ENCODE measurements at regions of chr14 and their contacts with region 1.

Region 1: DNA sequence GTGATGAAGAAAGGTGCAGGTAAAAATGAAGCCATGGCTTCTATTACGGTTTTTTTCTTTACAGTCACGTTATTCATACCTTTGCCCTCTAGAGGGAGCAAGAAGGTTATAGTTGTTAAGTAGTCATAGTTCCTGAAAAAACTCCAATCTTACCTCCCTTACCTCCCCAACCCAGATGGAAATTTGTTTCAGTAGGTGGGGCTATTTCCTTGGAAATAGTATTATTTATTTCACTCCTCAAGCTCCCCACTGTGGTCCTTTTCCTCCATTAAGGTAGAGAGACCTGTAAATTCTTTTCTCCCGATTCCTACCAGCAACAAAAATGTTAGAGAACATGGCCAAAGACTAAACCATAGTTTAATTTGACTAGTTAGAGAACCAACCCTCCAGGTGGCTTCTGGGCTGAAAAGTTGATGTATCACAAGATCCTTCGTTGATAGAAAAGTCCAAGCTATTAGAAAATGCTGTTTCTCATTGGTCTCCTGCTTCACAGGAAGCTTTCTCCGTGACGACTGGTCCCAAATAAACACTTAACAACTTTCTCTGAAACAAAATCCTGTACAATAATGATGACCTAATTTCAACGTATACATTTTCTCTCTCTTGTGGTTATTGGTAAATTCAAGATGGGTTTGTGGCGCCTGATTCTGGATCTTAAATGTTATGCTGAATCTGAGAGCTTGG is 43.5 kb downstream of the TMX1 start:
- DNase-seq: peak; percentile 95
- H3K4me3 ChIP-seq: no peak overlapping the region
- H3K27ac ChIP-seq: peak overlapping the region; percentile 58
- H3K4me1 ChIP-seq: peaks cover 13% of the 10 kb centered on the region
- H3K27me3 ChIP-seq: no peaks in the 10 kb centered on the region

Region 2: GRCh38 chr14:50985124-50985858 is 298.3 kb before region 1 on chr14:
- in situ Hi-C with region 1: no loop called
- DNase-seq: peak; percentile 42
- H3K4me3 ChIP-seq: no peak overlapping the region
- H3K27ac ChIP-seq: no peak overlapping the region
- H3K4me1 ChIP-seq: peaks cover 8% of the 10 kb centered on the region; the same call in 1 of the 2 replicates
- H3K27me3 ChIP-seq: no peaks in the 10 kb centered on the region

Region 3: DNA sequence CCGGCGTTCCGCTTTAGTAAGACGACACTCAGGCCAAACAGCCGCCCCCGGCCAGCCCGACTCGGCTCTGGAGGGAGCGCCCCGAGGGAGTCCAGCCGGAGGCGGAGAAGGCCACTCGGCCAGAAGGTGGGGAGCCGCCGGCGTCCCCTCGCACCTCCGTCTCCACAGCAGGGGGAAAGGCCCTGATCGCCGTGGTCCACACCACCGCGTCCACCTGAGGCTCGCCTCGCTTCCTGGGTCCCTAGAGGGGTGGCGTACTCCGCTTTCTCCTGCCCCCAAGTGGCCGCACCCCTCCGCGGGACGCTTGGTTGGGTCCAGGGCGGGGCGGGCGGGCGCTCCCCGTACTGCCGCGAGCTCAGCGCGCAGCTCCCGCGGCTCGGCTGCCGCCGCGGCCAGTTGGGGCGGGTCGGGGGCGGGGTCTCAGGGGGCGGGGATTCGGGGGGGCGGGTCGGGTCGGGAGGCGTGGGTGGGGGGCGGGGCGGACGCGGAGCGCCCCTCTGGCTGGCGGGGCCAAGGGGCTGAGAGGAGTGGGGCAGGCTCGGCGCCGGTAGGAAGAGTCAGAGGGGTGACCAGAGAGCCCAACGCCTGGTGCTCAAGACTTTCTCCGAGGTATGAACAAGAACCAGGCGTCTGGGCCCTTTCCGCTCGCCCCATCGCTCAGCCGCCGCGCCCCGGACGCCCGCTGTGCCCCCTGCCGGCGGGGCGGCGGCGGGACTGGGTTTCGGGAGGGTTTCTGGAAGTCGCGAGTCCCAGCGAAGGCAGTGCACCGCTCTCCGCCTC is 368.0 kb after region 1 on chr14 and contains the start of gene FRMD6:
- in situ Hi-C with region 1: loop called (anchors 10 kb)
- DNase-seq: peak; percentile 96
- H3K4me3 ChIP-seq: peak within 1 kb of the TSS; percentile 97
- H3K27ac ChIP-seq: peak within 1 kb of the TSS; percentile 97
- H3K4me1 ChIP-seq: peaks cover 34% of the 10 kb centered on the region
- H3K27me3 ChIP-seq: no peaks in the 10 kb centered on the region
- total RNA-seq, gene FRMD6: 795 and 861 TPM in 2 replicates

Region 4: DNA sequence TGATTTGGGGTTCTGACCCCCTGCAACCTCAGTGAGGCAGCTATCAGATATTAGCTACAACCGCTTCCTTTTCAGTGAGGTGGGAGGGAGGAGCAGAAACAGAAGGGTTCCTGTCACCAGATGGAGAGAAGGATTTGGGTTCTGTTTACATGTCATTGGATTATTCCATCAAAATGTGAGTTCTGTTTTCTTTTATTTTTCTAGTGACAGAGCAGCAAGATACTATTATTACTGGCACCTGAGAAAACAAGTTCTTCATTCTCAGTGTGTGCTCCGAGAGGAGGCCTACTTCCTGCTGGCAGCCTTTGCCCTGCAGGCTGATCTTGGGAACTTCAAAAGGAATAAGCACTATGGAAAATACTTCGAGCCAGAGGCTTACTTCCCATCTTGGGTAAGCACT is 421.0 kb after region 1 on chr14:
- in situ Hi-C with region 1: no loop called
- DNase-seq: no peak
- H3K4me3 ChIP-seq: no peak overlapping the region
- H3K27ac ChIP-seq: peak overlapping the region; percentile 68
- H3K4me1 ChIP-seq: peaks cover 58% of the 10 kb centered on the region
- H3K27me3 ChIP-seq: no peaks in the 10 kb centered on the region

Region 5: DNA sequence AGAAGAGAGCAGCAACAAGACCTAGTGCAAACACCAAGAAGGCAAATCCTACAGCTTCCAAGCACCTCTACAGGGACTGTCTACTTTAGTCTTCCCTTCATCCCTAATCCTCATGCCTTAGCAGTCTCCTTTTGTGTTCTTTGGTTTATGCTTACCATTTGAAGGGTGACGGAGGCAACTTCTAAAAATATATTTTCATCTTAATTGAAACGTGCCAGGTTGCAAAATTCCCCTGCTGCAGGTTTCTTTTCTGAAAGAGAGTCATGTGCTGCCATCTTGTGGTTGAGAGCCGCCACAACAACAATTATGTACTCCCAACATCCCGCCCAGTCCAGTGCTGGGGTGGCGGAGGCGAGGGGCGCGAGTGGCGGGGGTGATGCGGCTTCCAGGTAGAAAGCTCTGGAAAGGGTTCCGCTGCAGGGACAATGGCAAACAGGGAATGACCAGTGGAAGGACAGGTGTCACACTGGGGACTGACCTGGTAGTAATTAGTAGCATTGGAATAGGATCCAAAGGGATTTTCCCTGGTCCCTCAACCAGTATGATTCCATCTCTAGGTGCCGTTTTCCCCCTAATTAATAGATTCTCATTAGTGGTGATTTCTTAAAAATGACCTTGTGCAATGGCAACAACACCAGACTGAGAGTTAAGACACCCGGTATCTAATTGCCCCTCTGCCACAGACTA is 496.6 kb after region 1 on chr14:
- in situ Hi-C with region 1: loop called (anchors 5 kb)
- DNase-seq: peak; percentile 72
- H3K4me3 ChIP-seq: peak overlapping the region; percentile 53
- H3K27ac ChIP-seq: no peak overlapping the region
- H3K4me1 ChIP-seq: peaks cover 19% of the 10 kb centered on the region
- H3K27me3 ChIP-seq: no peaks in the 10 kb centered on the region

Measured in GM23248 (cell line).